ENCODE measurements at regions of chr17 and their contacts with region 1.

Region 1: DNA sequence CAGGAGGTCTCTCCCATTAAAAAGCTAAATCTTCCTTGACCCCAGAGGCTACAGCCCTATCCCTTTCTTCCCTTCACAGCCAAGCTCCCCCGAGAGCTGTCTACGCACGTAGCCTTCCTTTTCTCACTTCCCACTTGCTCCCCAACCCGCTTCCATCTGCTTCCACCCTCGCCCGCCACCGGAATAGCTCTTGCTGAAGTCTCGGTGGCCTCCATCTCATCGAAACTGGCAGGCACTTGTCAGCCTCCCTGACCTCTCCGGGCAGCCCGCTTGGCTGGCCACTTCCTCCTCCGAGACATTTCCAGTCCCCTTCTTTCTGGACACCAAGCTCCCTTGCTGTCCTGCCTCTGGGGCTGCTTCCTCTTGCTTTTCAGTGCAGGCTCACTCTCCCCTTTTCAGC is 10.7 kb upstream of the EPOP start:
- DNase-seq: no peak
- H3K4me3 ChIP-seq: no peak overlapping the region
- H3K27ac ChIP-seq: no peak overlapping the region
- H3K4me1 ChIP-seq: peaks cover 6% of the 10 kb centered on the region
- H3K27me3 ChIP-seq: no peaks in the 10 kb centered on the region
- CTCF ChIP-seq: no peak
- POLR2A ChIP-seq: no peak

Region 2: DNA sequence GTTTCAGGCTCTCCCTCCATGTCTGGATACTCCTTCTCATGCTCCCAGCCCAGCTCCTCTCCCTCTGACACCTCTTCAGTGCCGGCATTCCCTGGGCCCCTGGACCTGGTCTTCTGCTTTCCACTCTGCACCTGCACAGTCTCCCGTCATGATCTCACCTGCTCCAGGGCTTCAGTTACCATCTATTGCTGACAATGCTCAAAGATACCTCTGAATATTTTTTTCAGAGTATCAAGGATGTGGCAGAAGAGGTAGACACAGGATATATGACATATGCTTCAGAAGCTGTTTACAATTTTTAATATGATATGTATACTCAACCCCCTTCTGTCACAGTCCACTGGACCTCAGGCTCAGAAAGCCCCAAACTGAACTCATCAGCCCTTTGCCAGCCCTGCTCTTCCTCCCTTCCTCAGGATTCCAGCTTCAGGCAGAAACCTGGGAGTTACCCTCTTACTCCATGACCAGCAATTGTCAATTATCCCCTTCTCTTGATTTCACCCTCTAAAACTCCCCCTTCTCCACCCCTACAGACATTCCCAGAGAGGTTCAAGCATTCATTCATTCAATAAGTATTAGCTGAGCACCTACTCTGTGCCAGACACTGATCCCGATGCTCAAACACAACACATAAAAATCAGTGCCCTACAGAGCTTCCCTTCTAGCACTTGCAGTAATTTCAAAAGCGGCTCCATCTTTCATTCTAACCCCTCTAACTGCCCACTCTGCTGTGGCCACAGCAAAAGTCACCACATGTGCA is 11.8 kb after region 1 on chr17:
- CTCF ChIA-PET with region 1: interaction called, 12 read pairs
- POLR2A ChIA-PET with region 1: interaction called, 3 read pairs
- dilution Hi-C with region 1: no loop called
- intact Hi-C with region 1: no loop called
- DNase-seq: no peak
- H3K4me3 ChIP-seq: no peak overlapping the region
- H3K27ac ChIP-seq: no peak overlapping the region
- H3K4me1 ChIP-seq: peaks cover 9% of the 10 kb centered on the region
- H3K27me3 ChIP-seq: peaks cover 0 to 2% of the 10 kb centered on the region in 2 experiments
- CTCF ChIP-seq: no peak
- POLR2A ChIP-seq: no peak

Measured in endothelial cell of umbilical vein (primary cell).